GM12878 (cell line): ENCODE measurements at regions of chr1 and their contacts with region 1.

Region 1: DNA sequence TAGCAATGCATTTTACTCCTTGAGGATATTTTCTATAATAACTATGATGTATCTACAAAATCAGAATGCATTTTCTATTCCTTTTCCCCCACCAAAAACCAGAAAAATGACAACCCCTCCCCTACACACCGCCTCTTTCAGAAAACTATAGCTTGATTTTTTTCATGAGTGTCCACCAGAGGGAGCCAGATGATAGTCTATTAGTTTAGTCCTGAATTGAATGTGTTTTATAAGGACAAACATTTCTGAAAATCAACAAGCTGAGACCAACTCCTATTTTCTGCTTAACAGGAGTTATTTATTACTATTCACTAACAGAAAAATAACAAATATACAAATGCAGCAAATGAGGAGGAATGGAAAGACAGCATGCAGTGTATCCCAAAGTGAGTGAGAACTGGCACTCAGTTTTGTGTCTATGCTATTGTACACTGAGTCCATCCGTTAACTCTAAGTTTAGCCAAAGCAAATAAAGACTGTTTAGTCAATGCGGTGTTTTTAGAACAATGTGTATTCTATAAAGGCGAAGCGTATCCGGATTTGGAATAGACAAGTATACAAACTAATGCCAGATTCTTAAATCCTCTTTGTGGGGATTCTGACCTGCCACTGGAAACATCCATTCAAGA is 182.6 kb downstream of the VAV3 start:
- DNase-seq: no peak
- ATAC-seq: 0 out of 3 replicates have a peak, but pooled peaks have one; percentile 16
- H3K4me3 ChIP-seq: no peak overlapping the region
- H3K27ac ChIP-seq: no peak overlapping the region
- H3K4me1 ChIP-seq: peaks cover 16% of the 10 kb centered on the region; the same call in 1 of the 2 replicates
- H3K27me3 ChIP-seq: no peaks in the 10 kb centered on the region
- CTCF ChIP-seq: peak; percentile 48 to 67 (median 49); a peak in 5 of 6 replicates
- EP300 ChIP-seq: no peak
- POLR2A ChIP-seq: no peak
- RAD21 ChIP-seq: peak; percentile 96

Region 2: DNA sequence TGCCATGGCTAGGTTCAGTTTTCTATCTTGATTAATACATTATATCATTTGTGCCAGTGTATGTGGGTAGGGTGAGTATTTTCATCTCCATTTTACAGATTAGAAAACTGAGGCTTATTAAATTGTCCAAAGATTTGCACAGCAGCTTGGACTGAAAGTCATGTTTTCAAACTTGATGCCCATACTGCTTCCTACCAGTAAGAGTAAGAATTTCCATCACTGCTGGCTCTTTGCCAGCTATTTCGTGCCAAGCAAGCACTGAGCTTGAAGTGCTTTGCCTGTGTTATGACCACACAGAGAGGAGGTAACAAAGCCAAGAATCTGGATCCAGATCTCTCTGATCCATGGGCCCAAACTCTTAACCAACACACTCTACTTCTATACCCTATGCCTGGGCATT is 112.3 kb before region 1 on chr1:
- CTCF ChIA-PET with region 1: no interaction called
- POLR2A ChIA-PET with region 1: no interaction called
- RAD21 ChIA-PET with region 1: no interaction called
- SMC1A ChIA-PET with region 1: no interaction called
- in situ Hi-C with region 1: no loop called
- intact Hi-C with region 1: no loop called
- DNase-seq: no peak
- ATAC-seq: no peak
- H3K4me3 ChIP-seq: no peak overlapping the region
- H3K27ac ChIP-seq: no peak overlapping the region
- H3K4me1 ChIP-seq: no peaks in the 10 kb centered on the region
- H3K27me3 ChIP-seq: no peaks in the 10 kb centered on the region
- CTCF ChIP-seq: no peak
- EP300 ChIP-seq: no peak
- POLR2A ChIP-seq: no peak
- RAD21 ChIP-seq: no peak

Region 3: GRCh38 chr1:107795994-107796393 is 13.7 kb after region 1 on chr1:
- CTCF ChIA-PET with region 1: interaction called, 24 read pairs
- POLR2A ChIA-PET with region 1: interaction called, 3 read pairs
- RAD21 ChIA-PET with region 1: interaction called, 47 read pairs
- SMC1A ChIA-PET with region 1: interaction called, 16 read pairs
- in situ Hi-C with region 1: no loop called
- intact Hi-C with region 1: no loop called
- DNase-seq: no peak
- ATAC-seq: peak; percentile 84
- H3K4me3 ChIP-seq: no peak overlapping the region
- H3K27ac ChIP-seq: no peak overlapping the region
- H3K4me1 ChIP-seq: peaks cover 4% of the 10 kb centered on the region; the same call in 1 of the 2 replicates
- H3K27me3 ChIP-seq: no peaks in the 10 kb centered on the region; a peak in 1 of 4 replicates
- CTCF ChIP-seq: no peak
- EP300 ChIP-seq: no peak
- POLR2A ChIP-seq: no peak
- RAD21 ChIP-seq: no peak

Region 4: DNA sequence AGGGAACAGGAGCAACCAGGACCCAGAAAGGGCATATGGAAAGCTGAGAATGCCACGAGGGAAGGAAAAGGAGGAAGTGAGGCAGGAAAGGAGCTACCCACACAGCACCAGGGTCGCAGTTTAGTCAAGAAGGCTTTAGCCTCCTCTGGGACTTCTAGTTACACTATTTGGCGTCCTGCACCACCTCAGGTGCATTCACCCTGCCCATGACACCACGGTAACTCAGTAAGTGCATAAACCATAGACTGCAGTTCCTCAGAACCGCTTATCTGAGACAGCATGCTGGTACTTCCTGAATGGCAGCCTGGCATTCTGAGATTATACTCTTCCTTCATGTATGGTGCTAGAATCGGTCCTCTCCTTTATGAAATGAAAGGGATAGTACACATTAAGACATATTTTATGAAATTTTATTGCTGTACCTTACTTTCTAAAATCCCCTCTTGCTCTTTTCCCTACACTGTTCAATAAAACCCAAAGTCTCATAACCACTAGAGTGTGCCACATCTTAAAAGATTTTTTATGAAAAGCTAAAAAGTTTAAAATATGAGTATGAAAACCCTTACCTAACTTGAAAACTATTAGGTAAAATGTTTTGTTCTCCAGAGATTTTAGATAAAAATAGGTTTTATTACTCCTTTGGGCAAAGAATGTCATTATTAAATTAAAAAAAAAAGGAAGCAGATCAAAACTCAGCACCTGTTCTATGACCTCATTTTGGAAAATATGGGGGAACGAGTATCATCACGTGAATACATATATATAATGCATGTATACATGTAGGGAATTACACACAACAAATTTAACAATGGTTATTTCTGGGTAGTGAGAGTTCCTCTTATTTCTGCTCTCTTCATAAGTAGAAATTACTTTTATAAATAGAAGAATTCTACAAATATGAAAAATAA is 115.4 kb after region 1 on chr1:
- CTCF ChIA-PET with region 1: interaction called, 11 read pairs
- POLR2A ChIA-PET with region 1: no interaction called
- RAD21 ChIA-PET with region 1: interaction called, 14 read pairs
- SMC1A ChIA-PET with region 1: interaction called, 4 read pairs
- in situ Hi-C with region 1: no loop called
- intact Hi-C with region 1: no loop called
- DNase-seq: no peak
- ATAC-seq: peak; percentile 76
- H3K4me3 ChIP-seq: no peak overlapping the region
- H3K27ac ChIP-seq: no peak overlapping the region
- H3K4me1 ChIP-seq: peaks cover 14% of the 10 kb centered on the region
- H3K27me3 ChIP-seq: no peaks in the 10 kb centered on the region
- CTCF ChIP-seq: no peak; a peak in 1 of 6 replicates
- EP300 ChIP-seq: no peak
- POLR2A ChIP-seq: no peak
- RAD21 ChIP-seq: no peak

Region 5: DNA sequence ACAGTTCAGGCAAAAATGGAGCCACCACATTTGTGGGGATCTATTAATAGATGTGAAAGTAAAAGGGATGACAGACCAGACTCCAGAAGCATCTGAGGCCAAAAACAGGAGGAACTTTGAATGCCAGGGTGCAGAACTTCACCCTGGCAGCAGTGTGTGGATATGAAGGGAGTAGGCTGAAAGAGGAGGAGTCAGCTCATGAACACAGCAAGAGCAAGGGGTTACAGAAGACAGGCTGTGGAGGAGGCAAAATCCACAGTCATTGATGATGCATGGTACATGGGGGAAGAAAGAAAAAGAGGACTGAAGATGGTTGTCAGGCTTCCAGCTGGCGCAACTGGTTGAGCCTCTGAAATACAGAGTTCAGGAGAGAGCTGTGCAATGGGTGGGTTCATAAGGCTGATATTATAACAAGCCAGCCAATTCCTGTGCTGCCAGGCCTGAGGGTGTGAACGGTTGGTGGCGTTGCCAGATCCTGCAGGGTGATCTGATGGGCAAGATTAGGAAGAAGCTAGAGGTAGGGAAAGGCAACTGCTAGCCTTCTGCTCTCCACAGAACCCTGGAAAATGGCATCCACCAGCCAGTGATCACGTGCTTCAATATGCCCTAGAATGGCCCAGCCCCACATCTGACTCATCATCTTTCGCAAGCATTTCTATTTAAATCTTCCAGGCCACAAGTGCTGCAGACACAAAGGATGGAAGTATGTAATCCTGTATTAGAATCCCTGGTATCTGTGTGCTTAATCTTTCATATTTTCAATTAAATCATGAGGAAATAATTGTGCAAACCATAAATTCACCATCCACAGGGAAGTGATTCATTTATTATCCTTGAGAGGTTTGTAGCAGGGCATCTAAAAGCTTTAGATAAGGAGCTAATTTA is 335.9 kb after region 1 on chr1:
- CTCF ChIA-PET with region 1: interaction called, 568 read pairs
- POLR2A ChIA-PET with region 1: no interaction called
- RAD21 ChIA-PET with region 1: interaction called, 425 read pairs
- SMC1A ChIA-PET with region 1: interaction called, 461 read pairs
- in situ Hi-C with region 1: no loop called
- intact Hi-C with region 1: no loop called
- DNase-seq: no peak
- ATAC-seq: peak; percentile 29; the same call in 1 of the 3 replicates
- H3K4me3 ChIP-seq: no peak overlapping the region
- H3K27ac ChIP-seq: no peak overlapping the region
- H3K4me1 ChIP-seq: no peaks in the 10 kb centered on the region
- H3K27me3 ChIP-seq: no peaks in the 10 kb centered on the region; a peak in 3 of 4 replicates
- CTCF ChIP-seq: no peak
- EP300 ChIP-seq: no peak
- POLR2A ChIP-seq: no peak
- RAD21 ChIP-seq: no peak

Region 6: GRCh38 chr1:108503076-108503740 is 720.9 kb after region 1 on chr1:
- CTCF ChIA-PET with region 1: no interaction called
- POLR2A ChIA-PET with region 1: no interaction called
- RAD21 ChIA-PET with region 1: no interaction called
- SMC1A ChIA-PET with region 1: no interaction called
- in situ Hi-C with region 1: loop called (anchors 25 kb)
- intact Hi-C with region 1: loop called (anchors 10 kb)
- DNase-seq: no peak
- ATAC-seq: no peak
- H3K4me3 ChIP-seq: no peak overlapping the region
- H3K27ac ChIP-seq: no peak overlapping the region
- H3K4me1 ChIP-seq: 0 out of 2 replicates have a peak, but pooled peaks cover 3% of the 10 kb centered on the region
- H3K27me3 ChIP-seq: 0 out of 4 replicates have a peak, but pooled peaks cover 0 to 3% of the 10 kb centered on the region in 2 experiments
- CTCF ChIP-seq: no peak
- EP300 ChIP-seq: no peak
- POLR2A ChIP-seq: no peak
- RAD21 ChIP-seq: no peak